ENCODE measurements at regions of chr15 and their contacts with region 1.

Region 1: GRCh38 chr15:45037936-45038335 is 14.9 kb downstream of the SORD start:
- DNase-seq: no peak

Region 2: DNA sequence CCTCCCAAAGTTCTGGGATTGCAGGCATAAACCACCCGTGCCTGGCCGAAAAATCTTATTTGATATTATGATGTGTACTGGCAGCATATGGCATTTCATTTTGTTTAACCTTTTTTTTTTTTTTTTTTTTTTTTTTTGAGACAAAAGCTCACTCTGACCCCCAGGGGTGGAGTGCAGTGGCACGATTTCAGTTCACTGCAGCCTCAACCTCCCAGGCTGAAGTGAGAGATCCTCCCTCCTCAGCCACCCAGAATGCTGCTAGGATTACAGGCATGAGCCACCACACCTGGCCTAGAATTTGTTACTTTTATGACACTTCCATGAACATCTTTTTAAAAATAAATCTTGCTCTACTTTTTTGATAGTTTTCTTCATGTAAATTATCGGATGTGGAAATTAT is 69.5 kb before region 1 on chr15:
- intact Hi-C with region 1: loop called (anchors 2 kb)
- DNase-seq: no peak